Endothelial cell of umbilical vein (primary cell): ENCODE measurements at regions of chr1 and their contacts with region 1.

Region 1: GRCh38 chr1:68346188-68346808 is 103.5 kb downstream of the RPE65 start:
- DNase-seq: peak; percentile 68
- H3K4me3 ChIP-seq: no peak overlapping the region
- H3K27ac ChIP-seq: no peak overlapping the region
- H3K4me1 ChIP-seq: no peaks in the 10 kb centered on the region
- H3K27me3 ChIP-seq: no peaks in the 10 kb centered on the region
- CTCF ChIP-seq: peak; percentile 37 to 39
- POLR2A ChIP-seq: no peak

Region 2: GRCh38 chr1:67535474-67535873 is 810.8 kb before region 1 on chr1:
- CTCF ChIA-PET with region 1: interaction called, 3 read pairs
- POLR2A ChIA-PET with region 1: no interaction called
- dilution Hi-C with region 1: no loop called
- intact Hi-C with region 1: loop called (anchors 10 kb)
- DNase-seq: peak; percentile 92
- H3K4me3 ChIP-seq: no peak overlapping the region
- H3K27ac ChIP-seq: no peak overlapping the region
- H3K4me1 ChIP-seq: peaks cover 10% of the 10 kb centered on the region
- H3K27me3 ChIP-seq: no peaks in the 10 kb centered on the region
- CTCF ChIP-seq: peak; percentile 93 to 94
- POLR2A ChIP-seq: no peak

Region 3: DNA sequence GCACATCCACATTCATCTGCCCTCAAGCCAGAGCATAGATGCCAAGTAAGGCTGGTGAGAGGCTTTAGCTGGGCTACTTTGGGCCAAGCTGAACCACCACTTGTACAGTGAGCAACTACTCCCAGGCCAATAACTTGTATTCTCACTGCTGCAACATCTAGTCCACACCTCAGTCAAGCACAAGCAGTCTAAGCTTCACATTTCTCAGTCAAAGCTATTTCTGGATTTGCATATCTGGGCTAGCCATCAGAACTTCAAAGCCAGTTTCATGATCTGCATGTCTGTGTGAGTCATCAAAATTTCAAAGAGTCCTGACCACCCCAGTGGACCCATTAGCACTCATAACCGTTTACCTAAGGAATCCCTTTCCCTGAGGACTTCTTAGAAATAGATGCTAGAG is 218.1 kb before region 1 on chr1:
- CTCF ChIA-PET with region 1: interaction called, 312 read pairs
- POLR2A ChIA-PET with region 1: no interaction called
- dilution Hi-C with region 1: loop called (anchors 25 kb)
- intact Hi-C with region 1: no loop called
- DNase-seq: no peak
- H3K4me3 ChIP-seq: no peak overlapping the region
- H3K27ac ChIP-seq: no peak overlapping the region
- H3K4me1 ChIP-seq: no peaks in the 10 kb centered on the region
- H3K27me3 ChIP-seq: no peaks in the 10 kb centered on the region
- CTCF ChIP-seq: no peak
- POLR2A ChIP-seq: no peak

Region 4: GRCh38 chr1:68232354-68233148 is 113.7 kb before region 1 on chr1 and contains the start of gene WLS:
- CTCF ChIA-PET with region 1: interaction called, 9 read pairs
- POLR2A ChIA-PET with region 1: interaction called, 7 read pairs
- dilution Hi-C with region 1: no loop called
- intact Hi-C with region 1: loop called (anchors 1 kb)
- DNase-seq: peak; percentile 80
- H3K4me3 ChIP-seq: peak within 1 kb of the TSS; percentile 67 to 100 (median 93)
- H3K27ac ChIP-seq: peak within 1 kb of the TSS; percentile 85
- H3K4me1 ChIP-seq: peaks cover 29% of the 10 kb centered on the region
- H3K27me3 ChIP-seq: no peaks in the 10 kb centered on the region
- CTCF ChIP-seq: peak; percentile 5 to 16
- POLR2A ChIP-seq: peak; percentile 98
- total RNA-seq, gene WLS: 163 and 199 TPM in 2 replicates

Region 5: GRCh38 chr1:68331117-68331865 is 15.0 kb before region 1 on chr1:
- CTCF ChIA-PET with region 1: interaction called, 23 read pairs
- POLR2A ChIA-PET with region 1: no interaction called
- dilution Hi-C with region 1: no loop called
- intact Hi-C with region 1: no loop called
- DNase-seq: peak; percentile 87
- H3K4me3 ChIP-seq: no peak overlapping the region
- H3K27ac ChIP-seq: peak overlapping the region; percentile 30
- H3K4me1 ChIP-seq: peaks cover 29% of the 10 kb centered on the region
- H3K27me3 ChIP-seq: no peaks in the 10 kb centered on the region
- CTCF ChIP-seq: no peak
- POLR2A ChIP-seq: peak; percentile 26

Region 6: DNA sequence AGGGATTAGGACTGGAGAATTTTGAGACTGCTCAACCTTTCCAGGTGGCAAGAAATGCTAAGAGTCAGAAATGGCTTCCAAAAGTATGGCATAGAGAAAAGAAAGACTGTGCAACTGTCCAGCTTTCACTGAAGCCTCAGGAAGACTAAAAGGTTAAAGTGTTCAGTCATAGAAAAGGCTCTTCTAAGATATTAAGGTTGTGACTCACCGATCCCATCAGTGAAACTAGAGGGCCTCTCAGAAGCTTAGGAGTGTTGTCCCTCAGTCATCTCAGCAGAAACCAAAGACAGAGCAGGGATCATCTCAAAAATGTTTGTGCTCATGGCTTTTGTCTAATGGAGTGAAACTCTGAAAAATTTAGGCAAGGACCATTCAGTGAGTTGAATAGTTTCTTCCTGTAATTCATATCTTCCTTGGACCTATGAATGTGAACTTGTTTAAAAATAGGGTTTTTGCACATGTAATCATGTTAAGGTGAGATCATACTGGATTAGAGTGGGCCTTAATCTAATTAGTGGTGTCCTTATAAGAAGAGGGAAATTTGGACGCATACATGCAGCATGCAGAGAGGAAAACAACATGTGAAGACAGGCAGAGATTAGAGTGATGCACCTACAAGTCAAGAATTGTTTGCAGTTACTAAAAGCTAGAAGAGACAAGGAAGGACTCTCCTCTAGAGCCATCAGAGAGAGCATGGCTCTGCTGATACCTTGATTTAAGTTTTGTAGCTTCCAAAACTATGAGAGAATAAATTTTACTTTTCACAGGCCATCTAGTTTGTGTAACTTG is 32.2 kb after region 1 on chr1:
- CTCF ChIA-PET with region 1: interaction called, 17 read pairs
- POLR2A ChIA-PET with region 1: no interaction called
- dilution Hi-C with region 1: no loop called
- intact Hi-C with region 1: no loop called
- DNase-seq: peak; percentile 11
- H3K4me3 ChIP-seq: no peak overlapping the region
- H3K27ac ChIP-seq: peak overlapping the region; percentile 35
- H3K4me1 ChIP-seq: peaks cover 24% of the 10 kb centered on the region
- H3K27me3 ChIP-seq: no peaks in the 10 kb centered on the region
- CTCF ChIP-seq: no peak
- POLR2A ChIP-seq: no peak

Region 7: GRCh38 chr1:68442822-68443556 is 96.7 kb after region 1 on chr1:
- CTCF ChIA-PET with region 1: interaction called, 31 read pairs
- POLR2A ChIA-PET with region 1: no interaction called
- dilution Hi-C with region 1: no loop called
- intact Hi-C with region 1: loop called (anchors 1 kb)
- DNase-seq: peak; percentile 53
- H3K4me3 ChIP-seq: no peak overlapping the region
- H3K27ac ChIP-seq: no peak overlapping the region
- H3K4me1 ChIP-seq: no peaks in the 10 kb centered on the region
- H3K27me3 ChIP-seq: peaks cover 4 to 14% of the 10 kb centered on the region in 2 experiments
- CTCF ChIP-seq: peak; percentile 55 to 68
- POLR2A ChIP-seq: no peak

Region 8: GRCh38 chr1:68600049-68600661 is 253.9 kb after region 1 on chr1:
- CTCF ChIA-PET with region 1: no interaction called
- POLR2A ChIA-PET with region 1: no interaction called
- dilution Hi-C with region 1: no loop called
- intact Hi-C with region 1: no loop called
- DNase-seq: peak; percentile 21
- H3K4me3 ChIP-seq: no peak overlapping the region
- H3K27ac ChIP-seq: no peak overlapping the region
- H3K4me1 ChIP-seq: no peaks in the 10 kb centered on the region
- H3K27me3 ChIP-seq: peaks cover 0 to 3% of the 10 kb centered on the region in 2 experiments
- CTCF ChIP-seq: peak; percentile 50
- POLR2A ChIP-seq: no peak

Region 9: DNA sequence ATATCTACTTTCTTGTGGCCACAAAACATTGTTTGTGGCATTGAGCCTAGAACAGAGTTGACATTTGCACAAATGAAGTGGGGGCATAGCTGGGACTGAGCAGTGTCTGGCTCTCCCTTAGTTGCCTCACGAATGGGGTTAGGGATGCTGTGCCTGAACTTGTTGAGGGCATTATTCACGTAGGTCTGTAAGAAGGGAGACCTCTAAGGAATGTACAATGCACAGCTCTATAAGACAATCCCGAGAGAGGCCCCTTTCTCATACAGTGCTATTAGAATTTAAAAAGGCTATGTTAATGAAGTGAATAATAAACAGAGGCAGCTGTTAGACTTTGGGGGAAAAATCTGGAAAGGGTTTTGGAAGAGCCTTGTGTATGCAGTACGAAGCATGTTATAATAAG is 269.0 kb after region 1 on chr1:
- CTCF ChIA-PET with region 1: no interaction called
- POLR2A ChIA-PET with region 1: no interaction called
- dilution Hi-C with region 1: no loop called
- intact Hi-C with region 1: no loop called
- DNase-seq: no peak
- H3K4me3 ChIP-seq: no peak overlapping the region
- H3K27ac ChIP-seq: no peak overlapping the region
- H3K4me1 ChIP-seq: no peaks in the 10 kb centered on the region
- H3K27me3 ChIP-seq: no peaks in the 10 kb centered on the region
- CTCF ChIP-seq: no peak
- POLR2A ChIP-seq: no peak